CD8-positive, alpha-beta T cell (primary cell): ENCODE measurements at regions of chr3 and their contacts with region 1.

Region 1: GRCh38 chr3:106381939-106382335 is 513.1 kb upstream of the CBLB start:
- DNase-seq: no peak
- ATAC-seq: no peak
- H3K4me3 ChIP-seq: no peak overlapping the region
- H3K4me3 Mint-ChIP-seq: no peak overlapping the region
- H3K27ac ChIP-seq: no peak overlapping the region
- H3K27ac Mint-ChIP-seq: no peak overlapping the region
- H3K4me1 ChIP-seq: no peaks in the 10 kb centered on the region
- H3K4me1 Mint-ChIP-seq: no peaks in the 10 kb centered on the region
- H3K27me3 ChIP-seq: no peaks in the 10 kb centered on the region
- H3K27me3 Mint-ChIP-seq: no peaks in the 10 kb centered on the region
- CTCF ChIP-seq: no peak

Region 2: GRCh38 chr3:106281220-106281619 is 100.7 kb before region 1 on chr3:
- CTCF ChIA-PET with region 1: no interaction called
- POLR2A ChIA-PET with region 1: no interaction called
- intact Hi-C with region 1: loop called in 1 of 2 experiments (anchors 10 kb)
- DNase-seq: no peak
- ATAC-seq: no peak
- H3K4me3 ChIP-seq: no peak overlapping the region
- H3K4me3 Mint-ChIP-seq: no peak overlapping the region
- H3K27ac ChIP-seq: no peak overlapping the region
- H3K27ac Mint-ChIP-seq: no peak overlapping the region
- H3K4me1 ChIP-seq: no peaks in the 10 kb centered on the region
- H3K4me1 Mint-ChIP-seq: peaks cover 12% of the 10 kb centered on the region
- H3K27me3 ChIP-seq: no peaks in the 10 kb centered on the region
- H3K27me3 Mint-ChIP-seq: no peaks in the 10 kb centered on the region
- CTCF ChIP-seq: no peak

Region 3: GRCh38 chr3:106811376-106811775 is 429.4 kb after region 1 on chr3:
- CTCF ChIA-PET with region 1: no interaction called
- POLR2A ChIA-PET with region 1: no interaction called
- intact Hi-C with region 1: no loop called
- DNase-seq: no peak
- ATAC-seq: no peak
- H3K4me3 ChIP-seq: no peak overlapping the region
- H3K4me3 Mint-ChIP-seq: no peak overlapping the region
- H3K27ac ChIP-seq: no peak overlapping the region
- H3K27ac Mint-ChIP-seq: no peak overlapping the region
- H3K4me1 ChIP-seq: no peaks in the 10 kb centered on the region
- H3K4me1 Mint-ChIP-seq: no peaks in the 10 kb centered on the region
- H3K27me3 ChIP-seq: no peaks in the 10 kb centered on the region
- H3K27me3 Mint-ChIP-seq: peaks cover 3% of the 10 kb centered on the region
- CTCF ChIP-seq: no peak